CD8-positive, alpha-beta T cell (primary cell): ENCODE measurements at regions of chr2 and their contacts with region 1.

Region 1: GRCh38 chr2:157420771-157421323 is 23.0 kb downstream of the CYTIP start:
- DNase-seq: peak in 2 of 9 experiments; percentile 52 to 72
- ATAC-seq: peak; percentile 19
- H3K4me3 ChIP-seq: no peak overlapping the region
- H3K4me3 Mint-ChIP-seq: peak overlapping the region; percentile 47
- H3K27ac ChIP-seq: peak overlapping the region; percentile 2 to 84
- H3K27ac Mint-ChIP-seq: peak overlapping the region; percentile 94
- H3K4me1 ChIP-seq: peaks cover 66% of the 10 kb centered on the region
- H3K4me1 Mint-ChIP-seq: peaks cover 73% of the 10 kb centered on the region
- H3K27me3 ChIP-seq: no peaks in the 10 kb centered on the region
- H3K27me3 Mint-ChIP-seq: no peaks in the 10 kb centered on the region
- CTCF ChIP-seq: no peak

Region 2: GRCh38 chr2:157433394-157433793 is 12.5 kb after region 1 on chr2:
- CTCF ChIA-PET with region 1: interaction called, 25 read pairs
- POLR2A ChIA-PET with region 1: interaction called, 105 read pairs
- intact Hi-C with region 1: loop called (anchors 2 kb)
- DNase-seq: no peak
- ATAC-seq: peak; percentile 10
- H3K4me3 ChIP-seq: peak overlapping the region; percentile 57 to 83
- H3K4me3 Mint-ChIP-seq: peak overlapping the region; percentile 80
- H3K27ac ChIP-seq: peak overlapping the region; percentile 44 to 92
- H3K27ac Mint-ChIP-seq: peak overlapping the region; percentile 91
- H3K4me1 ChIP-seq: peaks cover 65% of the 10 kb centered on the region
- H3K4me1 Mint-ChIP-seq: peaks cover 85% of the 10 kb centered on the region
- H3K27me3 ChIP-seq: no peaks in the 10 kb centered on the region
- H3K27me3 Mint-ChIP-seq: no peaks in the 10 kb centered on the region
- CTCF ChIP-seq: no peak